PC-3 (cell line): ENCODE measurements at regions of chr4 and their contacts with region 1.

Region 1: GRCh38 chr4:125314676-125315575 is at the start of gene FAT4:
- DNase-seq: peak; percentile 85
- ATAC-seq: peak; percentile 88
- H3K4me3 ChIP-seq: peak within 1 kb of the TSS; percentile 93
- H3K27ac ChIP-seq: no peak within 1 kb of the TSS
- H3K4me1 ChIP-seq: peaks cover 6% of the 10 kb centered on the region
- H3K27me3 ChIP-seq: no peaks in the 10 kb centered on the region
- CTCF ChIP-seq: no peak
- total RNA-seq, gene FAT4: 0.95 and 1.4 TPM in 2 replicates

Region 2: GRCh38 chr4:124641715-124642381 is 673.1 kb before region 1 on chr4:
- CTCF ChIA-PET with region 1: no interaction called
- POLR2A ChIA-PET with region 1: no interaction called
- intact Hi-C with region 1: no loop called
- DNase-seq: peak; percentile 93
- ATAC-seq: peak; percentile 75
- H3K4me3 ChIP-seq: no peak overlapping the region; the same call in 1 of the 2 replicates
- H3K27ac ChIP-seq: peak overlapping the region; percentile 77
- H3K4me1 ChIP-seq: peaks cover 38% of the 10 kb centered on the region
- H3K27me3 ChIP-seq: no peaks in the 10 kb centered on the region
- CTCF ChIP-seq: no peak

Region 3: GRCh38 chr4:125352521-125352920 is 37.6 kb after region 1 on chr4:
- CTCF ChIA-PET with region 1: no interaction called
- POLR2A ChIA-PET with region 1: no interaction called
- intact Hi-C with region 1: no loop called
- DNase-seq: no peak
- ATAC-seq: no peak
- H3K4me3 ChIP-seq: no peak overlapping the region
- H3K27ac ChIP-seq: no peak overlapping the region
- H3K4me1 ChIP-seq: no peaks in the 10 kb centered on the region
- H3K27me3 ChIP-seq: no peaks in the 10 kb centered on the region
- CTCF ChIP-seq: no peak

Region 4: GRCh38 chr4:125620066-125620860 is 305.3 kb after region 1 on chr4:
- CTCF ChIA-PET with region 1: no interaction called
- POLR2A ChIA-PET with region 1: no interaction called
- intact Hi-C with region 1: loop called (anchors 10 kb)
- DNase-seq: no peak
- ATAC-seq: no peak
- H3K4me3 ChIP-seq: no peak overlapping the region
- H3K27ac ChIP-seq: no peak overlapping the region
- H3K4me1 ChIP-seq: no peaks in the 10 kb centered on the region
- H3K27me3 ChIP-seq: no peaks in the 10 kb centered on the region
- CTCF ChIP-seq: no peak

Region 5: DNA sequence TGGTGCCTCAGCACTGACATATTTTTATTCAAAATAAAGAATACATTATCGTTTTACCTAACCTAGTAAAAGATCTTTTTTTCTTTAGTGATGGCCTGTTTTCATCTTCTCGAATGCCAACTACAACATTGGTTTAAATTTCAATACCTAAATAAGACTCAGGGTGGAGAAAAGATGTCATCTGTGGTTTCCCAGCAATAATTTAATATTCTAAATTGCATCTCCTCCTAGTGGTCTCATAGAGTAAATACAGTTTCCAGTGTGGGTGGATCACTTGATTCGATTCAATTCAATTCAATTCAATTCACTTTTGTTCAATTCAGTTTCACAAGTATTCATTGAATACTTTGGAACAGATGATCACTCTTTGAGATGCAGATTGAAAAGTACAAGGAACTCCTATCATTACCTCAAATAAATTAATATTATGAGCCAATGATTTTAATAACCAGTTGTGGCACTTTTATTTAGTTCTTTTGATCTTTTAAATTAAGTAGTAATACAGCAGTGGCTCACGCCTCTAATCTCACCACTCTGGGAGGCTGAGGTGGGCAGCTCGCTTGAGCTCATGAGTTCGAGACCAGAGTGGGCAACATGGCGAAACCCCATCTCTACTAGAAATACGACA is 427.0 kb after region 1 on chr4:
- CTCF ChIA-PET with region 1: no interaction called
- POLR2A ChIA-PET with region 1: no interaction called
- intact Hi-C with region 1: loop called (anchors 1 kb)
- DNase-seq: peak; percentile 48
- ATAC-seq: no peak
- H3K4me3 ChIP-seq: no peak overlapping the region
- H3K27ac ChIP-seq: no peak overlapping the region
- H3K4me1 ChIP-seq: 0 out of 2 replicates have a peak, but pooled peaks cover 6% of the 10 kb centered on the region
- H3K27me3 ChIP-seq: no peaks in the 10 kb centered on the region
- CTCF ChIP-seq: peak; percentile 70

Region 6: GRCh38 chr4:125750828-125751466 is 436.0 kb after region 1 on chr4:
- CTCF ChIA-PET with region 1: interaction called, 10 read pairs
- POLR2A ChIA-PET with region 1: no interaction called
- intact Hi-C with region 1: loop called (anchors 1 kb)
- DNase-seq: peak; percentile 62
- ATAC-seq: peak; percentile 83
- H3K4me3 ChIP-seq: no peak overlapping the region
- H3K27ac ChIP-seq: no peak overlapping the region
- H3K4me1 ChIP-seq: no peaks in the 10 kb centered on the region
- H3K27me3 ChIP-seq: no peaks in the 10 kb centered on the region
- CTCF ChIP-seq: peak; percentile 64

Region 7: DNA sequence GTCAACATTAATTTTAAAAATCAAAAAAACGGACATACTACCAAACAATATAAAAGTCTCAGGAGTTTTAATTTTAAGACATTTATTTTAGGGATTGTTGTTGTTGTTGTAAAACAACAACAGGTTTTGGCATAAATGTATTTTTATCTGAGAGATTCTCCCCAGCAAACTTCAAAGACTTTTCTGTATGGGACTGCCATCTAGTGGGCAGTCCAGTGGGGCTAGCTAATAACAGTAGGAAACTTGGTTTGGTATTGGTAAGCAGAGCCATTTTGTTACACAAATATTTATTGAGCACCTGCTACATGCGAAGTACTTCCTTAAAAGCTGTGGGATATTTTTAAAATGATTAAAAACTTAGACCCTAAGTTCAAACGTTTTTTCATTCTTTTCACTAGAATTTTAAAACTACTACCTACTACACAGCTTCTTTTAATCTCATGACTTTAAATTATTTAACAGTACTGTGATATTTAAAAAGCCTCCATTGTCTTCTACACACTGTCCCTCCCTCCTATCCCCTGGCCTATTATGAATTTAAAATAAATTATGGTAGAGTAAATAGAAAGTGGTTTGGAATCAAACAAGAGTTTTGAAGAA is 1289.4 kb after region 1 on chr4:
- CTCF ChIA-PET with region 1: no interaction called
- POLR2A ChIA-PET with region 1: no interaction called
- intact Hi-C with region 1: loop called (anchors 5 kb)
- DNase-seq: peak; percentile 38
- ATAC-seq: 0 out of 2 replicates have a peak, but pooled peaks have one; percentile 33
- H3K4me3 ChIP-seq: no peak overlapping the region
- H3K27ac ChIP-seq: no peak overlapping the region
- H3K4me1 ChIP-seq: no peaks in the 10 kb centered on the region
- H3K27me3 ChIP-seq: no peaks in the 10 kb centered on the region
- CTCF ChIP-seq: peak; percentile 70

Region 8: GRCh38 chr4:126687655-126688358 is 1372.9 kb after region 1 on chr4:
- CTCF ChIA-PET with region 1: interaction called, 4 read pairs
- POLR2A ChIA-PET with region 1: no interaction called
- intact Hi-C with region 1: loop called (anchors 10 kb)
- DNase-seq: no peak
- ATAC-seq: peak; percentile 83
- H3K4me3 ChIP-seq: no peak overlapping the region
- H3K27ac ChIP-seq: no peak overlapping the region
- H3K4me1 ChIP-seq: no peaks in the 10 kb centered on the region; the same call in 1 of the 2 replicates
- H3K27me3 ChIP-seq: no peaks in the 10 kb centered on the region
- CTCF ChIP-seq: no peak